A549 (cell line): ENCODE measurements at regions of chr7 and their contacts with region 1.

Region 1: DNA sequence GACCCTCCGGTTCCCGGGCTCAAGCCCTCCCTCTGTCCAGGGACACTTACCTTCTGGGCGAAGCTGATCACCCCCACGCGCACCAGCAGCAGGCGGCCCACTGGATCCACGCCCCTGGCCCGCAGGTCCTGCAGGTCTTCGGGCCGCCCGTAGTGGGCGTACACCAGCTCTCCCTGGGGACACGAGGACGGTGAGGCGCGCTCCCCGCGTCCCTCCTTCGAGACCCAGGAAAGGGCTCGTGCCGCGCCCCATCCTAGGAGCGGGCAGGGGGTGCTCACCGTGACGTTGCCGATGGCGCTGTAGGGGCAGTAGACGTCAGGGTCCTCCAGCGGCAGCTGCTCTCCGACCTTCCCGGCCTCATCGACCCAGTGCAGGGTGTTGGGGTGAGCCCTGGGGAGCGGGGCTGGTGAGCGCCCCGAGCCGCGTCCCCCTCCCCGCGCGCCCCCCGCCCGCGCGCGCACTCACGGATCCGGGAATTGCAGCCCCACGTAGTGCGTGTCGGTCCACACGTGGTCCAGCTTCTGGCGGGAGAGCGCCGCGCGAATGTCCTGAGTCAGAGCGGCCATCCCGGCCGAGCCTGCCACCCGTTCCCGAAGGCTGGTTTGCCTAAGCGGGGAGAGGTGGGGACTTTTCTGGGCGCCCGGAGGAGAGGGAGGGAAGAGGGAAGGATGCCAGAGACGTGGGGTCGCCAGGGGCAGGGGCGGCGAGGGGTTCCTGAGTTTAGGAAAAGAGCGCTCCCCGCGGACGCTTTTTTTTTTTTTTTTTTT is 8.2 kb downstream of the TFR2 start:
- DNase-seq: peak; percentile 79 to 90
- ATAC-seq: peak; percentile 88 to 93
- H3K4me3 ChIP-seq: peak overlapping the region; percentile 66
- H3K27ac ChIP-seq: peak overlapping the region; percentile 82 to 97
- H3K4me1 ChIP-seq: 0 out of 3 replicates have a peak, but pooled peaks cover 3% of the 10 kb centered on the region
- CTCF ChIP-seq: peak; percentile 43; the same call in 2 of the 3 replicates
- EP300 ChIP-seq: no peak
- POLR2A ChIP-seq: peak; percentile 62
- RAD21 ChIP-seq: peak; percentile 16 to 26; a peak in 1 of 5 replicates

Region 2: GRCh38 chr7:100396421-100396982 is 236.6 kb before region 1 on chr7:
- CTCF ChIA-PET with region 1: no interaction called
- POLR2A ChIA-PET with region 1: no interaction called
- DNase-seq: no peak
- ATAC-seq: no peak
- H3K4me3 ChIP-seq: no peak overlapping the region
- H3K27ac ChIP-seq: no peak overlapping the region
- H3K4me1 ChIP-seq: no peaks in the 10 kb centered on the region
- CTCF ChIP-seq: no peak
- EP300 ChIP-seq: no peak
- POLR2A ChIP-seq: no peak
- RAD21 ChIP-seq: no peak

Region 3: DNA sequence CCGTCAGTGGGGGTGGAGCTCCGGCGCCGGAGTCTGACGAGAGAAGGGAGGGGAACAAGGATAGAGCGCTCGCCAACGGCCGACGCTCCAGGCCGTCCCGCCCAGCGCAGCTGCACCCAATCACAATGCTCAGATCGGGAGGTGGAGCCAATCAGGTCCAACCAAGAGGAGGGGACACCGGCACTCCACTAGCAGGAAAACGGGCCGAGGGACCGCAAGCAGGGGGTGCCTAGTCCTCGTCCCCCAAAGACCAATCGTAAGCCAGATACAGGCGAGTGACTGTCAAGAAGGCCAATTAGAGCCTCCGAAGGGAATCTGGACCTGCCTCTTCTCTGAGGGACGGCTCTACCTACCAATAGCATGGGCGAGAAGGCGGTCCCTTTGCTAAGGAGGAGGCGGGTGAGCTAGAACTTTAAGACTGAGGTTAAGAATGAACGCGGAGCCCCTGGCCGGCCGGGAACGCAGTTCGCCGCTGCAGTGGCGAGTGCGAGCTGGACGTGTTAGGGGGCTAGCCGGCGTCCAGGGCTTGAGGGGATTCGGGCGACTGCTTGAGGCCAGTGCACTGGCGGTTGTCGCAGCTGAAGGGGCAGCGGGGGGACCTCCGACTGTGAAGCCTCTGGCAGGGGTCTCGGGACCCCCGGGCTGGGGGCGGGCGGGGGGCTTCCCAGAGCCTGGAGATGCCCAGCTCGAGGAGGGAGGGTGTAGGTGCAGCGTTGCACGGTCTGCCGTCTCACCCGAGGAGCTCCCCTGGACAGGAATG is 46.7 kb before region 1 on chr7 and contains the start of gene FBXO24:
- CTCF ChIA-PET with region 1: interaction called, 7 read pairs
- POLR2A ChIA-PET with region 1: interaction called, 12 read pairs
- DNase-seq: peak; percentile 100
- ATAC-seq: peak; percentile 88 to 95
- H3K4me3 ChIP-seq: peak within 1 kb of the TSS; percentile 99
- H3K27ac ChIP-seq: peak within 1 kb of the TSS; percentile 95 to 99
- H3K4me1 ChIP-seq: peaks cover 15% of the 10 kb centered on the region
- CTCF ChIP-seq: no peak
- EP300 ChIP-seq: no peak
- POLR2A ChIP-seq: peak; percentile 79
- RAD21 ChIP-seq: no peak
- polyA plus RNA-seq, gene FBXO24: 0.36 and 0.52 TPM in 2 replicates

Region 4: GRCh38 chr7:100620804-100621203 is 12.3 kb before region 1 on chr7:
- CTCF ChIA-PET with region 1: interaction called, 69 read pairs
- POLR2A ChIA-PET with region 1: interaction called, 3 read pairs
- DNase-seq: no peak
- ATAC-seq: no peak
- H3K4me3 ChIP-seq: no peak overlapping the region
- H3K27ac ChIP-seq: no peak overlapping the region
- H3K4me1 ChIP-seq: no peaks in the 10 kb centered on the region
- CTCF ChIP-seq: no peak
- EP300 ChIP-seq: no peak
- POLR2A ChIP-seq: no peak
- RAD21 ChIP-seq: no peak

Region 5: GRCh38 chr7:100655908-100656674 is 23.0 kb after region 1 on chr7 and contains the start of gene ACTL6B:
- CTCF ChIA-PET with region 1: interaction called, 25 read pairs
- POLR2A ChIA-PET with region 1: interaction called, 3 read pairs
- DNase-seq: peak; percentile 36 to 72
- ATAC-seq: peak; percentile 66 to 75; a peak in 5 of 6 replicates
- H3K4me3 ChIP-seq: no peak within 1 kb of the TSS
- H3K27ac ChIP-seq: no peak within 1 kb of the TSS
- H3K4me1 ChIP-seq: peaks cover 6% of the 10 kb centered on the region; the same call in 2 of the 3 replicates
- CTCF ChIP-seq: no peak
- EP300 ChIP-seq: no peak
- POLR2A ChIP-seq: no peak
- RAD21 ChIP-seq: no peak
- polyA plus RNA-seq, gene ACTL6B: not detected in 2 replicates

Region 6: GRCh38 chr7:100670074-100670473 is 36.9 kb after region 1 on chr7:
- CTCF ChIA-PET with region 1: interaction called, 12 read pairs
- POLR2A ChIA-PET with region 1: interaction called, 5 read pairs
- DNase-seq: no peak
- ATAC-seq: no peak
- H3K4me3 ChIP-seq: no peak overlapping the region
- H3K27ac ChIP-seq: no peak overlapping the region
- H3K4me1 ChIP-seq: no peaks in the 10 kb centered on the region
- CTCF ChIP-seq: no peak
- EP300 ChIP-seq: no peak
- POLR2A ChIP-seq: no peak
- RAD21 ChIP-seq: no peak

Region 7: GRCh38 chr7:100691676-100692577 is 58.8 kb after region 1 on chr7:
- CTCF ChIA-PET with region 1: interaction called, 142 read pairs
- POLR2A ChIA-PET with region 1: interaction called, 4 read pairs
- DNase-seq: peak; percentile 74 to 93
- ATAC-seq: peak; percentile 72 to 94; a peak in 5 of 6 replicates
- H3K4me3 ChIP-seq: no peak overlapping the region
- H3K27ac ChIP-seq: no peak overlapping the region
- H3K4me1 ChIP-seq: peaks cover 26% of the 10 kb centered on the region
- CTCF ChIP-seq: peak; percentile 87
- EP300 ChIP-seq: no peak
- POLR2A ChIP-seq: no peak
- RAD21 ChIP-seq: peak; percentile 75 to 78